Posterior cingulate gyrus (tissue), 11 donors: ENCODE measurements at regions of chr3 and their contacts with region 1.

Region 1: DNA sequence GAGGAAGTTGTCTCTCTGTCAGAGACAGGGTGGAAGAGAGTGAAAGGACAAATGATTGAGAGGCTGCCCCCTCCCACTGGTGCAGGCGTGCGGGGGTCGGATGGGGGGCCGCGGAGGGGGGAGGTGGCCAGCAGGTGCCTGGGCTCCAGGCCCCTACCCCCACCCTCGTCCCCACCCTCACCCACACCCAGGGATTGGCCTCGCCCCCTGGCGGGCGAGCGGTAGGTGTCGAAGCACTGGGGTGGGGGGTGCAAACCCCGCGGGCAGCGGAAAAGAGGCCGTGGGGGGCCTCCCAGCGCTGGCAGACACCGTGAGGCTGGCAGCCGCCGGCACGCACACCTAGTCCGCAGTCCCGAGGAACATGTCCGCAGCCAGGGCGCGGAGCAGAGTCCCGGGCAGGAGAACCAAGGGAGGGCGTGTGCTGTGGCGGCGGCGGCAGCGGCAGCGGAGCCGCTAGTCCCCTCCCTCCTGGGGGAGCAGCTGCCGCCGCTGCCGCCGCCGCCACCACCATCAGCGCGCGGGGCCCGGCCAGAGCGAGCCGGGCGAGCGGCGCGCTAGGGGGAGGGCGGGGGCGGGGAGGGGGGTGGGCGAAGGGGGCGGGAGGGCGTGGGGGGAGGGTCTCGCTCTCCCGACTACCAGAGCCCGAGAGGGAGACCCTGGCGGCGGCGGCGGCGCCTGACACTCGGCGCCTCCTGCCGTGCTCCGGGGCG is at the start of gene KAT2B:
- DNase-seq: peak; percentile 71 to 97 (median 80)

Region 2: DNA sequence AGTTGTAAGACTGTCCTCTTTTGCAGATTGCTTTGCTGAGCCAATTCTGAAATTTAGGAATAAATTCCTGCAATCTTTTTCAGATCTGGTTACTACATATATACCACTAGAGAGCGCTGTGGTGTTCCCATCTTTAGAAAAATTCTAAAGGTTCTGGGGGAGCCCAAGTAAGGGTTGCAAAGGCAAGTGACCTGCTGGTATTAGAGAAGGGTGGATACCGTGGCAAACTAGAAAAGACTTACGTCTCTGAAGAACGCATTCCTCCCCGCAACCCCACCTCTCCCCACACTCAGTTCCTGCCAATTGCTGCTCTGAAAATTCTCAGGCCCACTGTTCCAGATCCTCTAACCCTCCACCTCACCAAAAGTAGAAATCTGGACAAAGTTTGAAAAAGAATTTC is 154.5 kb before region 1 on chr3:
- intact Hi-C with region 1: loop called (anchors 5 kb)
- DNase-seq: no peak

Region 3: DNA sequence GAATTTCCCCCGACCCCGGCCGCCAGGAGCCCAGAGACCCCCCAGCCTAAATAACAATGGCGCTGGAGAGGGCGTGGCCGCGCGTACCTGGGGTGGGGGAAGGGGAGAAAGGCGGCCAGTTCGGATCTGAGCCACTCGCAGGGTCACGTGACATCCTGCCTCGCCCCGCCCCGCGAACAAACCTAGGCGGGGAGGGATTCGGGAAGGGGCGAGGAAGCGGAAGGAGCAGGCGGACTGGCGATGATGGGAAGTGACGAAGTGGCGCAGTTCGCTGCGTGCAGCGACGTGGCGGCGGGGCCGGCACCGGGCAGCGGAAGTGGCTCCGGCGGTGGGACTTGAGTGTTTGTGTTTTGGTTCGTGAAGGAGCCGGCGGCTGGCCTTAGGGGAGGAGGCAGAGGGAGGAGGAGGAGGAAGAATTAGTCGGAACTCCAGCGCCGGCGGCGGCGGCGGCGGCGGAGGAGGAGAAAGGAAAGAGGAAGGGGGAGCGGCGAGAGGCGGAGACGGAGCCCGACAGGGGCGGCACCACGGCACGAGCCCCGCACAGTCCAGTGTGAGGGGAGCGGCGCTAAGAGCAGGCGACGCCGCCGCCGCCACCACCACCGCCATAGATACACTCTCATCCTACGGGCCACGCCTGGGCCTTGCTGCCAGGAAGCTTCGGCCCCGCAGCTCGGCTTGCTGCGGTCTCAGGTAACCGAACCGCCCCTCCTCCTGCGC is 92.9 kb before region 1 on chr3 and contains the start of gene RAB5A:
- intact Hi-C with region 1: loop called (anchors 1 kb)
- DNase-seq: peak; percentile 92 to 99 (median 95)

Region 4: DNA sequence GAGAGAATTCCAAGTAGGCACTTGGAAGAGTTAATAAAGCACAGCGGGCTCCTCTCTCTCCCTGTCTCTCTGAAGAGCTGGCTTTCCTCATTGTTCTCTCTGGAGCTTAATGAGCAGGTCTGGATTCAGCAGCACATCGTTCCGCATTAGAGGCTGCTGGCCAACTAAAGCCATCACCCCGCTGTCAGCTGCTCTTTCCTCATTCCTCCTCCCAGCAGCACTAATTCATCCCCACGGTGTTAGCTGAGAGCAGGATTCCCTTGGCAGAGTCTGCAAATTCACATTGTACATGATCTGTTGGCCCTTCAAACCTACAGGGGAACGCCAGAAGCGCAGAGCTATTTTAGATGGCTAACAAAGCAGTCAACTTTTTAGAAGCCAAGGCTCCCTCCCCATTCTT is 101.9 kb after region 1 on chr3:
- intact Hi-C with region 1: loop called (anchors 5 kb)
- DNase-seq: peak; percentile 40 to 89 (median 57)

Region 5: DNA sequence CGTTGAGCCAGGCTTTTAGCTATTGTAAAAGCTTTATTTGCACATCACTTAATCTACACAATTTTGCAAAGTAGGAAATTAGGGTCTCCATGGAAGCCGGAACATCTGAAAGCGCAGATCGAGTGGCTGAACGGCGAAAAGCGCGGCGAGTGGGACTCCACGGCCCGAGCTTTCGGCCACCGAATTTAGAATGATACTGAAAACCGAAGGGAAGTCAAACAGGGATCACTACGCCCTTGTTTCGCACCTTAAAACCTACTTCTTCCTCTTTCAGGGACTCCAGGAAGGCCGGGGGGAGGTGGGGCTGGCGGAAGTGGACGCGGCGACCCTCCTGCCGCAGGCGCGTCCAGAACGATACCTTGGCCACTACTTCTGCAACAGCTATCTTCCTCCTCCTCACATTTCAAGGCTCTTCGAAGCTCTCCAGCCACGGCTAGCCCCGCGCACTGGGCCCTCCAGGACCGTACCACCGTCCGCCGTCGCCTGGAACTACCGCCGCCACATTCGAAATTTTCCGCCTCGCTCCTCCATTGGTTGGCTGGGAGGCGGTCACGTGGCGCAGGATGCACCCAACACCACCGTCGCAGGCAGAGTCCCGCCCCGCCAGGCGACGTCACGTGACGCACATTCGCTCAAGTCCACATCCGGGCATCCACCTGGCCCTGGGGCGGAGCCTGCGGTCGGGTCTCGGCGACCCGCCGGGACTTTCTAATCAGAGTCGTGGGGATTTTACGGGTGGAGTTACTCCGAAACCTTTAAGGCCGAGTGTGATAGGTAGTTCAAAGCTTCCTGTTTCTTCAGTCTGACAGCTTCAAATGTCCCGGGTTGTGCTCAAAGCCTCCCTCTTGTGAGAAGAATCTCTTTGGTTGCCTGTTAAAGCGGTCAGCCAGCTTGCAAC is 146.0 kb after region 1 on chr3 and contains the start of gene SGO1:
- intact Hi-C with region 1: loop called (anchors 5 kb)
- DNase-seq: peak; percentile 98 to 100 (median 99)